H1 (cell line): ENCODE measurements at regions of chr17 and their contacts with region 1.

Region 1: GRCh38 chr17:43316522-43317142 is 82.2 kb upstream of the ARL4D start:
- DNase-seq: no peak
- H3K4me3 ChIP-seq: no peak overlapping the region
- H3K27ac ChIP-seq: no peak overlapping the region
- H3K4me1 ChIP-seq: no peaks in the 10 kb centered on the region; a peak in 1 of 7 replicates
- H3K27me3 ChIP-seq: no peaks in the 10 kb centered on the region
- CTCF ChIP-seq: no peak
- EP300 ChIP-seq: no peak
- POLR2A ChIP-seq: no peak
- RAD21 ChIP-seq: no peak

Region 2: DNA sequence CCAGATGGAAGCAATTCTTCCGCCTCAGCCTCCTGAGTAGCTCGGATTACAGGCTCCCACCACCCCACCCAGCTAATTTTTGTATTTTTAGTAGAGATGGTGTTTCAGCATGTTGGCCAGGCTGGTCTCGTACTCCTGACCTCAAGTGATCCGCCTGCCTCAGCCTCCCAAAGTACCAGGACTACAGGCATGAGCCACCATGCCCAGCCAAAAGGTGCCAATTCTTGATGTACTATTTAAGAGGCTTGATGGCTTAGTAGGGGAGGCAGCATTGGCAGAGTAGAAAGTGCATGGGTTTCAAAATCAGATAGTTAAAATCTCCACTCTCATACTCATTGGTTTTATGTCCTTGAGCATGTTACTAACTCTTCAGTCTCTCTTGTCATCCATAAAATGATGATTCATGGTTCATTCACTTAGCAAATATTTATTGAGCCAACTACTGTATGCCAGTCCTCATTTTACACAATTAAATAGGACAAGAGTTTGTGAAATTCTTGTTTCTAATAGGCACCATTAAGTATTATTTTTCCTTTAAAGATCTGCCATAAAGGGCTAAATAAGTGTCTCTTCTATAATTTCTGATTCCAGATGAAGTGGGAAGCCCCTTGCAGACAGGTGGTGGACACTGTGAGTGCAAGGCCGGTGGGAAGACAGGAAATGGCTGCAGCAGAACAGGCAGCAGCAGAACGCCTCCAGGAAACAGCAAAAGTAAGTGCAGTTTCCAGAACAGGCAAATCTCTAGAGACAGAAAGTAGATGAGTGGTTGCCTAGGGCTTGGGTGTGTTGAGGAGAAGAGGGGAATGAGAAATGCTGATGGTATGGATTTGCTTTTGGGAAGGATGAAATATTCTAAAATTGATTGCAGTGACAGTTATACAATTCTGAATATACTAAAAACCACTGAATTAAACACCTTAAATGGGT is 326.6 kb before region 1 on chr17:
- CTCF ChIA-PET with region 1: no interaction called
- POLR2A ChIA-PET with region 1: no interaction called
- DNase-seq: no peak
- H3K4me3 ChIP-seq: no peak overlapping the region
- H3K27ac ChIP-seq: no peak overlapping the region
- H3K4me1 ChIP-seq: no peaks in the 10 kb centered on the region
- H3K27me3 ChIP-seq: no peaks in the 10 kb centered on the region
- CTCF ChIP-seq: no peak
- EP300 ChIP-seq: no peak
- POLR2A ChIP-seq: no peak
- RAD21 ChIP-seq: no peak

Region 3: GRCh38 chr17:43024407-43025289 is 292.0 kb before region 1 on chr17 and contains the start of gene RND2:
- CTCF ChIA-PET with region 1: no interaction called
- POLR2A ChIA-PET with region 1: interaction called, 23 read pairs
- DNase-seq: peak; percentile 93 to 95
- H3K4me3 ChIP-seq: peak within 1 kb of the TSS; percentile 58 to 93 (median 84)
- H3K27ac ChIP-seq: peak within 1 kb of the TSS; percentile 91
- H3K4me1 ChIP-seq: peaks cover 19 to 28% (median 21%) of the 10 kb centered on the region in 4 experiments
- H3K27me3 ChIP-seq: no peaks in the 10 kb centered on the region
- CTCF ChIP-seq: peak; percentile 68 to 91 (median 89)
- EP300 ChIP-seq: 0 out of 3 replicates have a peak, but pooled peaks of 1 of the 2 experiments have one; percentile 53
- POLR2A ChIP-seq: peak in 1 of 2 experiments; percentile 40; a peak in 1 of 3 replicates
- RAD21 ChIP-seq: peak; percentile 93 to 94
- total RNA-seq, gene RND2: 51.3 and 56.8 TPM in 2 replicates

Region 4: DNA sequence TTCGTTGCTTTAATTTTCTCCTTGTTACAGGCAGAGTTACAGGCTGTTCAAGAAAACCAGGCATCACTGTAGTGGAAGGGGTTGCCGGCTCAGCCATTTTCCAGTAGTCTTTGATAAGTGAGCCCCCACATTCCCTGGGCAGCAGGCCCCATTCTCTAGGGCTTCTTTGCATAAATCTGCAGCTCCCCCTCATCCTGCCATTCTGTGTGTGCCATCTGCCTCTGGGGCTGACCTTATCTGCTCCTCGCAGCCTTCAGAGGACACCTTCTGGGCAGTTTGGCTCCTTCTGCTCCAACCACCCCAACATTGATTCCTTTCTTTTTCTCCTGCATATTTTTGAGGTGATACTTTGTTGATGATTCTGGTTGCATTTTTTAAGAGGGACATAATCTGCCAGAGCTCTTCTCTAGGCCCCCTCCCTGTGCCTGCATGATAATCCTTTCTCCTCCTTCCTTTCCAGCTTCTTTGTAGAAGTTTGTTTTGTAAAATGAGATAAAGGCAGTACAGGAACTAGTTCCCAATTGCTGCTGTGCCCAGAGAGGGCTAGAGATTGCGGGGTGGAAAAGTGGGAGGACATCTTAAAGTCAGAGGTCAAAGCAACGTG is 274.5 kb before region 1 on chr17:
- CTCF ChIA-PET with region 1: no interaction called
- POLR2A ChIA-PET with region 1: interaction called, 10 read pairs
- DNase-seq: no peak
- H3K4me3 ChIP-seq: peak overlapping the region in 1 of 4 experiments; percentile 1; a peak in 1 of 8 replicates
- H3K27ac ChIP-seq: peak overlapping the region; percentile 49
- H3K4me1 ChIP-seq: peaks cover 1 to 32% (median 22%) of the 10 kb centered on the region in 4 experiments
- H3K27me3 ChIP-seq: no peaks in the 10 kb centered on the region
- CTCF ChIP-seq: no peak
- EP300 ChIP-seq: no peak
- POLR2A ChIP-seq: no peak
- RAD21 ChIP-seq: peak; percentile 26 to 44; a peak in 3 of 4 replicates

Region 5: GRCh38 chr17:43170766-43171585 is 145.7 kb before region 1 on chr17 and contains the start of gene NBR1:
- CTCF ChIA-PET with region 1: interaction called, 6 read pairs
- POLR2A ChIA-PET with region 1: interaction called, 23 read pairs
- DNase-seq: peak; percentile 91 to 98
- H3K4me3 ChIP-seq: peak within 1 kb of the TSS; percentile 73 to 90 (median 82)
- H3K27ac ChIP-seq: peak within 1 kb of the TSS; percentile 94
- H3K4me1 ChIP-seq: peaks cover 0 to 6% (median 2%) of the 10 kb centered on the region in 4 experiments; a peak in 4 of 7 replicates
- H3K27me3 ChIP-seq: no peaks in the 10 kb centered on the region
- CTCF ChIP-seq: peak; percentile 12 to 41 (median 14)
- EP300 ChIP-seq: 0 out of 3 replicates have a peak, but pooled peaks of 1 of the 2 experiments have one; percentile 30
- POLR2A ChIP-seq: peak; percentile 19 to 71
- RAD21 ChIP-seq: peak in 1 of 2 experiments; percentile 44; a peak in 2 of 4 replicates
- total RNA-seq, gene NBR1: 34.8 and 36.0 TPM in 2 replicates

Region 6: DNA sequence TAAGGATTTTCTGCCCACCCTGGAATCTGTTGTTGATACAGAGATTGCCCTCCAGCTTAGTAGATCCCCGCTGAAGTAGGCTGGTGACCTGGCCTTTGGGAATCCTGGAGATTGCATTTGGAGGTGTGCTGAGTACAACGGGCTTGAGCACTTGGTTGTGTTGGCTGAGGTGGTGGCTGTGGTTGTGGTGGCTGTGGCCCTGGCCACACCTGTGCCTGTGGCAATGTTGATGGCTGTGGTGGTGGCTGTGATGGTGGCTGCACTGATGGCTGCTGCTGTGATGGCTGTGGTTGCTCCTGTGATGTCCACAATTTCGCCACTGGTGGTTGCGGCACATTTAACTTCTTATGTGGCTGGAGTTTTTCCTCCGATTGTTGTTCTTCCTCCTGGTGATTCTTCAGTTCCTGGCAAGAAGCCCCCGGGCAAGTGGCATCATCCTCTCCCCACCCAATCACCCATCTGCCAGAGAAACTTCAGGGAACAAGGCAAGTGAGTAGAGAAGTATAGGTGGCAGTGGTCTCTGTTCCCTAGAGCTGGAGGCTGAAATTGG is 92.4 kb before region 1 on chr17:
- CTCF ChIA-PET with region 1: no interaction called
- POLR2A ChIA-PET with region 1: interaction called, 123 read pairs
- DNase-seq: peak in 1 of 2 experiments; percentile 33
- H3K4me3 ChIP-seq: no peak overlapping the region
- H3K27ac ChIP-seq: no peak overlapping the region
- H3K4me1 ChIP-seq: no peaks in the 10 kb centered on the region
- H3K27me3 ChIP-seq: no peaks in the 10 kb centered on the region
- CTCF ChIP-seq: no peak
- EP300 ChIP-seq: no peak
- POLR2A ChIP-seq: no peak
- RAD21 ChIP-seq: no peak